ENCODE measurements at regions of chr9 and their contacts with region 1.

Region 1: DNA sequence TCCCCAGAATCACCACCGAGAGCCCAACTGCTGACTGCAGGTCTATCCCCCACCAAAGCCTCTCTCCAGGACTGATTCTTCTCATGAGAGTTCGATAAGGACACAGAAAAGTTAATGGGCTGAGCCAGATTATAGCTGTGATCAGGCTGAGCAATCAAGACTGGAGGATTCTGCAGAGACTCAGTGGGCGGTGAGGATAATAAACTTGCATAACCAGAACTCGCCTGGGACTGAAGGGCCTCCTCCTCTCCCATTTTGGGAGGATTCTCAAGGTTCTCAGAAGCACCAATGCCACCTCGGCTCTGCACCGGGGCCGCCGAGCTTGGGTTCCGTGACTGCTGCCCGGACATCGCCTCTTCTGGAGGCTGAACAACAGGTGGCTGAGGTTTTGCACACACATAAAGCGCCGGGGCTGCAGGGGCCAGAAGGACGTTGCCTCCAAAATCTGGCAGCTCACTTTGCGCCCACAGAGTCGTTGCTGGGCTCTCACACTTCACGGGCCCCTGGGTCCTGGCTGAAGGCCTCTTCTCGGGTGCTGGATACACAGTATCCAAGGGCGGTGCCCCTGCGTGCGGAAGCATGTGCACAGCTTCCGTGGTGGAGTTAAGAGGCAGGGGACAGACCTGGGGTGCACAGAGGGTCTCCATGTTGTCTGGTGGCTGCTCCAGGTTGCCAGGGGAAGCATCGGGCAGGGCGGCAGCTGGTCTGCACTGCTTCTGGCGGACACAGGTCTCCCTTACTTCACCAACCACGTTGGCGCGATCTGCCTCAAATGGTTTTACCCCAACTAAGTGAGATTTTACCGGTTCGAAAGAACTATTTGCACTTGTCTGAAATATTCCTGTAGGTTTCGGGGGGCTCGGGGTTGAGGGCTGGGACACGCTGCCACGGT is 7.6 kb downstream of the SEC16A start:
- DNase-seq: no peak
- H3K4me3 ChIP-seq: no peak overlapping the region
- H3K27ac ChIP-seq: no peak overlapping the region
- H3K4me1 ChIP-seq: peaks cover 0 to 5% (median 3%) of the 10 kb centered on the region in 4 donors
- H3K27me3 ChIP-seq: no peaks in the 10 kb centered on the region
- CTCF ChIP-seq: no peak
- EP300 ChIP-seq: no peak
- POLR2A ChIP-seq: no peak

Region 2: DNA sequence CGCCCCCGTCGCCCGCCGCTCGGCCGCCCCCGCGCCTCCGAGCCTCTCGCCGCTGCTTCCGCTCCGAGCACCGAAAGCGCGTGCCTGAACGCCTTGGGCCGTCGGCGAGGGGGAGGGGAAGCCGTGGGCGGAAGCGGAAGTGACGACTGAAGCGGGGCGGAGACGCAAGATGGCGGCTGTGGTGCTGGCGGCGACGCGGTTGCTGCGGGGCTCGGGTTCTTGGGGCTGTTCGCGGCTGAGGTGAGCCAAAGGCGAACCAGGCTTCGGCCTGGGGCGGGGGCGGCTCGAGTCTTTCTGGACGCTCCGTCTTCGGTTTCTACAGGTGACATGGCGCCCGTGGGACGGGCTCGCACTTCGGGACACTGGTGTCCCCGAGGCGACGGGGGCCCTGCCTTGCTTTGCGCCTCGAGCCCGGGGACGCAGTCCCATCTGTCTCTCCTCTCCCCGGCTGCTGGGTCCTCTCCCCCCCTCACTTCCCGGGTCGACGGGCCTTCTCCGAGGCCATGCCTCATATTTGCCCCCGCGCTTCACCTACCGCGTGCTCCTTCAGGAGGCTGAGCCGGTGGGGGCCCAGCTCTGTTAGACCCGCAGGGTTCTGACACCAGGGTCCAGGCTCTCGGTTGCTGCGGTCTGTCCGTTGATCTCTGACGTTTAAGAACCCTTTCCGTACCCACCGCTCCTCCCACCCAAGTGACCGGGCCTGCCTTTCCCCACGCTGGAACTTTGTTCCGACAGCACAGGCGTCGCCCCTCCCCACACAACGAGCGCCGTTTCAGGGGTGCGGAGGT is 64.5 kb before region 1 on chr9 and contains the starts of genes ENTR1 and PMPCA:
- intact Hi-C with region 1: no loop called
- DNase-seq: peak; percentile 97
- H3K4me3 ChIP-seq: peak within 1 kb of the TSS; percentile 87 to 99 (median 94)
- H3K27ac ChIP-seq: peak within 1 kb of the TSS; percentile 84 to 91 (median 88)
- H3K4me1 ChIP-seq: peaks cover 22 to 40% (median 32%) of the 10 kb centered on the region in 4 donors
- H3K27me3 ChIP-seq: no peaks in the 10 kb centered on the region
- CTCF ChIP-seq: peak in 1 of 3 experiments; percentile 15
- EP300 ChIP-seq: no peak
- POLR2A ChIP-seq: peak; percentile 87
- total RNA-seq, gene ENTR1: 26.2 to 44.8 (median 37.6) TPM
- total RNA-seq, gene PMPCA: 22.8 to 43.9 (median 35.0) TPM

Region 3: DNA sequence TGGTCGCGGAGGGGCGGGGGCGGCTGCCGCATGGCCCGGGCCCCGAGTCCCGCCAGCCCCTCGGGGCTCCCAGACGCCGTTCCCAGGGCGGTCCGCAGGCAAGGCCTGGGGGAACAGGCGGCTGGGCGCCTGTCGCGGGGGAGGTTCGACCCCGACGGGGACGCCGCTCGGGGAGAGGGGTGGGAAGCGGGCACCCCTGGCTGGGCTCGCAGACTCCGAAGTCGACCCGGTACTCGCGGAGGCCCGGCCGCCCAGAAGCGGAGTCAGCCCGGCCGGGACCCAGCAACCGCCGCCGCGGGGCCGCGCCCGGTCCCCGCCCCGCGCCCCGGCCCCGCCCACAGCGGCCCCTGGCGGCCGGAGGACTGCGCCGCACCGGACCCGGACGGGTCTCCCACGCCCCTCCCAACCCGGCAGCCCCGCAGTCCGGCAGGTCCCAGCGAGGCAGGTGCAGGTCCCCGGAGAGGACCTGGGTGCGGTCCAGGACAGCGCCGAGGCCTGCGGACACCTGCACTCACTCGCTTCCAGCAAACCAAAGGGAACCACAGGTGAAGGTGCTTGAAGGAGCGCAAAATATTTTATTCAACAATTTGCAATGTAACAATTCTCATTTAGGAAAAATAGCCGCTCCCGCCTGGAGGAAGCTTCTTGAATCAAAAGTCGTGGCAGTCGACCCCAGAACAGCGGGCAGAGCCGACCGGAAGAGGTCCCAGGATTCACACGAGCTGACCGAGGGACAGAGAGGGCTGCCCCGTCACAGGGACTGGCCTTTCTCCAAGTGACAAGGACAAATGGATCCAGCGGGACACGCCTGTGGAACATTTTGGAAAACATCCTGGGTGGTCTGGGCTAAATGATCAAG is 35.4 kb before region 1 on chr9 and contains the start of gene INPP5E:
- intact Hi-C with region 1: loop called (anchors 5 kb)
- DNase-seq: no peak
- H3K4me3 ChIP-seq: peak within 1 kb of the TSS; percentile 78 to 99 (median 92)
- H3K27ac ChIP-seq: peak within 1 kb of the TSS; percentile 80 to 86 (median 80)
- H3K4me1 ChIP-seq: peaks cover 33 to 53% (median 41%) of the 10 kb centered on the region in 4 donors
- H3K27me3 ChIP-seq: no peaks in the 10 kb centered on the region
- CTCF ChIP-seq: peak; percentile 67 to 90 (median 80)
- EP300 ChIP-seq: no peak
- POLR2A ChIP-seq: no peak
- total RNA-seq, gene INPP5E: 8.4 to 17.1 (median 12.5) TPM